Mammary epithelial cell (primary cell): ENCODE measurements at regions of chr7 and their contacts with region 1.

Region 1: GRCh38 chr7:131231381-131232220 is 96.1 kb upstream of the MKLN1 start:
- DNase-seq: no peak
- H3K4me3 ChIP-seq: no peak overlapping the region
- H3K27ac ChIP-seq: no peak overlapping the region
- H3K4me1 ChIP-seq: peaks cover 12% of the 10 kb centered on the region
- H3K27me3 ChIP-seq: no peaks in the 10 kb centered on the region
- CTCF ChIP-seq: no peak

Region 2: DNA sequence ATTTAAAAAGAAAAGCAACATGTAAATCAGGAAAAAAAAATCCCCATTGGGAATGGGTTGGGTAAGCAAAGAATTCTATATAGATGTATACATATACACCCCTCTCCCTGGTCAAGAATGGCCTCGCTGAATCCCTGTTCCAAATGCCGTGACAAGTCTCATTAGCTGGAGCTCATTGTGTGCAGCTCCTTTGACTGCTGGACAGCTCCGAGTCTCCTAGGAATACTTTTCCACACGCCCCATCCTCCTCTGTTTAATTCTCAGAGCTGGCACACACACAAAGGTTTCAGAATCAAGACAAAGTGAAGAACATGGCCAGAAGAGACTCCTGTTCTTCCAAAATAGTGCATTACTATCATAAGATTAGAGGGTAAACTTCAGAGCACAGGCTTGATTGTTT is 34.8 kb before region 1 on chr7:
- CTCF ChIA-PET with region 1: no interaction called
- dilution Hi-C with region 1: no loop called
- in situ Hi-C with region 1: no loop called
- intact Hi-C with region 1: loop called (anchors 5 kb)
- DNase-seq: peak; percentile 18
- H3K4me3 ChIP-seq: no peak overlapping the region
- H3K27ac ChIP-seq: no peak overlapping the region
- H3K4me1 ChIP-seq: no peaks in the 10 kb centered on the region
- H3K27me3 ChIP-seq: no peaks in the 10 kb centered on the region
- CTCF ChIP-seq: no peak

Region 3: DNA sequence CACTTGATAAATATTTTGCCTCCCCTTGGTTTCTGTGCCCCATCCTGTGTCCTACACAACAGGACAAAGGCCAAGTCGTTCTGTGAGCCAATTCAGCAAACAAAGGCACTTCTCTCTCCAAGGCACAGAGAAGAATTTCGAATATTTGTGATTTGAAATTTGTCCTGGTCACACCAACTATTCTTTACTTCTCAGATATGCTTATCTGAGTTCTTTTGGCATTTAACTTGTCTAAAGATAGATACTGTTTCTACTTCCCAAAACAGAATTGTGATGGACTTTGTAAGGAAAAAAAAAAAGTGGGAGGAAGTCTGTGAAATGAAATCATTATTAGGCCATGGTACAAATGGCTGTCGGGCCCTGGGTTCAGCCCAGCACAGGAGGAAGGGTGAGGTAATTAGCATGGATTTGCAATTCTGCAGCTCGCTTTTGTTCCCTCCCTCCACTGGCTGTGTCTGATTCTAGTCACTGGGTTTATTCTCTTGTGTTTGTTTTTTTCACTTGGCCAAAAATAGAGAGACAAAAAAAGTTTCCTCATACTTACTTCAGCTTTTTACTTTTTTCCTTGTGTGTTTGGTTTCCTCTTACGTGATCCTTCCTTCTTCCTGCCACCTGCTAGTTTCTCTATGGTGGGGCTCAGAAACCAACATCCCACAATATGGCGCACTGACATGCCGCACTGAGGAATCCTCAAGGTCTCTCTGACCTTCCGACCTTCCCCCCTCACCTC is 12.1 kb before region 1 on chr7:
- CTCF ChIA-PET with region 1: no interaction called
- dilution Hi-C with region 1: no loop called
- in situ Hi-C with region 1: no loop called
- intact Hi-C with region 1: no loop called
- DNase-seq: no peak
- H3K4me3 ChIP-seq: no peak overlapping the region
- H3K27ac ChIP-seq: no peak overlapping the region
- H3K4me1 ChIP-seq: no peaks in the 10 kb centered on the region
- H3K27me3 ChIP-seq: no peaks in the 10 kb centered on the region
- CTCF ChIP-seq: no peak